ENCODE measurements at regions of chr11 and their contacts with region 1.

Region 1: DNA sequence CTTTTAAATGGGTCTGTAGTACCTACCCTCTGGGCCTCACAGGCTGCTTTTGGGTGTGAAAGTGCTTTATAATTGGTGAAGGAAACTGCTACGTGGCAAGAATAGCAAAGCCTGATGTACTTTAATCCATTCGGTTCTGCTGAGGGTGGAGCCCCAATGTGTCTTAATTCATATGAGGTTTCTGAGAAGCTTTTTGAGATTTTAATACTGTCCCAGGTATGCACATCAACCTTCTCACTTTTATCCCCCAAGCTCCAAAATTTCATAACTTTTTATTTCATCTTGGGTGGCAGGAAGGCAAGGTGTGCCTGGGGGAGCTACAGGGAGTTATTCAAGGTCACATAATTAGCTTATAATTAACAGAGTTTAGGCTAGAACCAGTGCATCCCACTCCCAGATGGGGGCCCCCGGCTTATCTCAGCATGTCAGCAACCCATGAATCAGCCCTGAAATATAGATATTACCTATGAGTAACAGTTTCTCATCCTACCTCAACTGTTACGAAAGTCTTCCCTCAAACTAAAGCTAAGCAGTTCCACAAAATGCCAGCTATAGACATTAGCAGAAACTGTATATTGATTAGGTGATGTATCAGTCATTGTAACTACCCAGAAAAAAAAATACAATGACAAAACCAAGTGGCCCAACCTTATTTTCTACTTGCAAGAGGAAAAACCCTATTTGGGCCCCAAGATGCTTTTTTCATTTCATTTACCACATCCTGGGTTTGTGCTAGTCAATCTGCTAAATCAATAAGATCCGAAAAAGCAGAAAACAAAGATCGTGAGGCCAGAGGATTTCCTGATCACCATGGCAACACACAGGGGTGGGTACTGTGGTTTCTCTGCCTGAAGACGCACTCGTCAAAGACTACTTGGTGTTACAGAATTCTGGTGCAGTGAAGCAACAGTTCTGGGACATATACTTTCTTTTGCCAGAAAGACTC is 26.7 kb downstream of the CD44 start:
- DNase-seq: peak; percentile 70 to 99 (median 80)
- ATAC-seq: peak; percentile 69
- H3K4me3 ChIP-seq: peak overlapping the region; percentile 40
- H3K4me3 Mint-ChIP-seq: peak overlapping the region; percentile 72
- H3K27ac ChIP-seq: peak overlapping the region; percentile 96
- H3K27ac Mint-ChIP-seq: peak overlapping the region; percentile 96
- H3K4me1 ChIP-seq: peaks cover 97% of the 10 kb centered on the region
- H3K4me1 Mint-ChIP-seq: peaks cover 100% of the 10 kb centered on the region
- H3K27me3 ChIP-seq: no peaks in the 10 kb centered on the region
- H3K27me3 Mint-ChIP-seq: no peaks in the 10 kb centered on the region
- CTCF ChIP-seq: no peak

Region 2: DNA sequence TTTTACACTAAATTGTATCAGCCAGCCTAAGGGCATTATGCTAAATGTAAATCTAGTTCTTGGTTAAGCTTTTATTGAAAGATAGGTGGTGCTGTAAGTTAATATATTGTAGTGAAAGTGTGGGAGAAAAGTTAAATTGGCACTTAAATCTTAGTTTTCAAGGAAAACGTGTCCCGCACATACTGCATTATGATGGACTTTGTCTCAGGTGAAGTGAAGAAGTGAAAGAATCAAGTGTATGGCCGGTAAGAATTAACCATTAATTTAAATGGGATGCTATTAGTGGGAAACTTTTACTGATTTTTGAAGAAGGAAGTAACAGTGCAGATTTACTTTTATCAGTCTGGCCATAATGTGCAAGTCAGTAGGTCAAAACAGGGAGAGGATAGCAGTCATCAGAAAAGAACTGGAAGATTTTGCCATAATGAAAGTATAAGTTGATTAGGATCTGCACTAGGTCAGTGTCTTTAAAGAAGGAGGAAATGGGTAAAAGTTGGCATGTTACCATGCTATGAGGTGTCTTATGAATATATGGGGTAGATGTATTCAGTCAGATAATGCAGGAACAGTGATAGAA is 167.7 kb before region 1 on chr11:
- CTCF ChIA-PET with region 1: interaction called, 4 read pairs
- POLR2A ChIA-PET with region 1: interaction called, 20 read pairs
- intact Hi-C with region 1: loop called (anchors 2 to 5 kb)
- DNase-seq: peak in 3 of 14 experiments; percentile 42 to 56 (median 55)
- ATAC-seq: peak; percentile 64
- H3K4me3 ChIP-seq: no peak overlapping the region
- H3K4me3 Mint-ChIP-seq: peak overlapping the region; percentile 39
- H3K27ac ChIP-seq: no peak overlapping the region
- H3K27ac Mint-ChIP-seq: peak overlapping the region; percentile 48
- H3K4me1 ChIP-seq: no peaks in the 10 kb centered on the region
- H3K4me1 Mint-ChIP-seq: peaks cover 37% of the 10 kb centered on the region
- H3K27me3 ChIP-seq: no peaks in the 10 kb centered on the region
- H3K27me3 Mint-ChIP-seq: no peaks in the 10 kb centered on the region
- CTCF ChIP-seq: peak; percentile 94

Region 3: DNA sequence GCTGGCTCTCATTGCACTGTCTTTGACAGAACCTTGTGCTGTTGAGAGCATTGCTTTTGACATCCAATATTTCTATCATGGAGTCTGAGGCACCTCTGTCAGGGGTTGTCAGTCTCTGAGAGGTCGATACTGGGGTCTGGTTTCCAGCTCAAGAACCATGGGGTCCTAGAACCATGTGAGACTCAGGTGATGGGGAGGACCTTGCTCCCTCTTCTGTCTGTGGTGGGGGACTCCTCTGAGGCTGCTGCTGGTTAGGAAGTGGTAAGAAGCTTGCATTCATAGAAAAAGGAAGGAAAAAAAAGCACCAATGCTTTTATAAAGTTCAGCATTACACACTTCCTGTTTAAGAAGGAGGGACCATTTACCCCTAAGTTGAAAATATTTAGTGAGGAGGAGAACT is 118.5 kb before region 1 on chr11:
- CTCF ChIA-PET with region 1: interaction called, 4 read pairs
- POLR2A ChIA-PET with region 1: interaction called, 34 read pairs
- intact Hi-C with region 1: loop called (anchors 1 to 2 kb)
- DNase-seq: peak; percentile 27 to 91 (median 46)
- ATAC-seq: peak; percentile 70
- H3K4me3 ChIP-seq: no peak overlapping the region
- H3K4me3 Mint-ChIP-seq: peak overlapping the region; percentile 83
- H3K27ac ChIP-seq: peak overlapping the region; percentile 93 to 96
- H3K27ac Mint-ChIP-seq: peak overlapping the region; percentile 92
- H3K4me1 ChIP-seq: peaks cover 83% of the 10 kb centered on the region
- H3K4me1 Mint-ChIP-seq: peaks cover 98% of the 10 kb centered on the region
- H3K27me3 ChIP-seq: no peaks in the 10 kb centered on the region
- H3K27me3 Mint-ChIP-seq: no peaks in the 10 kb centered on the region
- CTCF ChIP-seq: no peak

Region 4: GRCh38 chr11:35138943-35139721 is 26.6 kb before region 1 on chr11 and contains the start of gene CD44:
- CTCF ChIA-PET with region 1: interaction called, 9 read pairs
- POLR2A ChIA-PET with region 1: interaction called, 317 read pairs
- intact Hi-C with region 1: loop called in 1 of 2 experiments (anchors 2 kb)
- DNase-seq: peak; percentile 70 to 95 (median 80)
- ATAC-seq: peak; percentile 77
- H3K4me3 ChIP-seq: peak within 1 kb of the TSS; percentile 88
- H3K4me3 Mint-ChIP-seq: peak within 1 kb of the TSS; percentile 97
- H3K27ac ChIP-seq: peak within 1 kb of the TSS; percentile 79 to 97
- H3K27ac Mint-ChIP-seq: peak within 1 kb of the TSS; percentile 96
- H3K4me1 ChIP-seq: peaks cover 46% of the 10 kb centered on the region
- H3K4me1 Mint-ChIP-seq: peaks cover 55% of the 10 kb centered on the region
- H3K27me3 ChIP-seq: no peaks in the 10 kb centered on the region
- H3K27me3 Mint-ChIP-seq: no peaks in the 10 kb centered on the region
- CTCF ChIP-seq: no peak
- total RNA-seq, gene CD44: 1,283 to 1,330 TPM

Region 5: GRCh38 chr11:35151241-35151640 is 14.5 kb before region 1 on chr11:
- CTCF ChIA-PET with region 1: interaction called, 13 read pairs
- POLR2A ChIA-PET with region 1: interaction called, 355 read pairs
- intact Hi-C with region 1: loop called (anchors 1 to 2 kb)
- DNase-seq: no peak
- ATAC-seq: no peak
- H3K4me3 ChIP-seq: no peak overlapping the region
- H3K4me3 Mint-ChIP-seq: peak overlapping the region; percentile 35
- H3K27ac ChIP-seq: peak overlapping the region; percentile 20 to 55
- H3K27ac Mint-ChIP-seq: peak overlapping the region; percentile 96
- H3K4me1 ChIP-seq: peaks cover 94% of the 10 kb centered on the region
- H3K4me1 Mint-ChIP-seq: peaks cover 100% of the 10 kb centered on the region
- H3K27me3 ChIP-seq: no peaks in the 10 kb centered on the region
- H3K27me3 Mint-ChIP-seq: no peaks in the 10 kb centered on the region
- CTCF ChIP-seq: no peak

Region 6: GRCh38 chr11:35214792-35215193 is 49.1 kb after region 1 on chr11:
- CTCF ChIA-PET with region 1: no interaction called
- POLR2A ChIA-PET with region 1: interaction called, 13 read pairs
- intact Hi-C with region 1: no loop called
- DNase-seq: peak in 4 of 14 experiments; percentile 47 to 72 (median 56)
- ATAC-seq: peak; percentile 22
- H3K4me3 ChIP-seq: no peak overlapping the region
- H3K4me3 Mint-ChIP-seq: peak overlapping the region; percentile 62
- H3K27ac ChIP-seq: peak overlapping the region; percentile 14 to 52
- H3K27ac Mint-ChIP-seq: peak overlapping the region; percentile 95
- H3K4me1 ChIP-seq: peaks cover 47% of the 10 kb centered on the region
- H3K4me1 Mint-ChIP-seq: peaks cover 96% of the 10 kb centered on the region
- H3K27me3 ChIP-seq: no peaks in the 10 kb centered on the region
- H3K27me3 Mint-ChIP-seq: no peaks in the 10 kb centered on the region
- CTCF ChIP-seq: no peak

Region 7: GRCh38 chr11:35436581-35437250 is 271.0 kb after region 1 on chr11:
- CTCF ChIA-PET with region 1: no interaction called
- POLR2A ChIA-PET with region 1: no interaction called
- intact Hi-C with region 1: no loop called
- DNase-seq: no peak
- ATAC-seq: no peak
- H3K4me3 ChIP-seq: no peak overlapping the region
- H3K4me3 Mint-ChIP-seq: no peak overlapping the region
- H3K27ac ChIP-seq: no peak overlapping the region
- H3K27ac Mint-ChIP-seq: no peak overlapping the region
- H3K4me1 ChIP-seq: no peaks in the 10 kb centered on the region
- H3K4me1 Mint-ChIP-seq: no peaks in the 10 kb centered on the region
- H3K27me3 ChIP-seq: peaks cover 16 to 33% of the 10 kb centered on the region in 2 experiments
- H3K27me3 Mint-ChIP-seq: peaks cover 68% of the 10 kb centered on the region
- CTCF ChIP-seq: no peak

Measured in CD4-positive, alpha-beta T cell (primary cell).